SK-N-SH (cell line): ENCODE measurements at regions of chr15 and their contacts with region 1.

Region 1: GRCh38 chr15:33994005-33994615 is 25.8 kb downstream of the CHRM5 start:
- DNase-seq: no peak
- H3K4me3 ChIP-seq: no peak overlapping the region
- H3K27ac ChIP-seq: no peak overlapping the region
- H3K4me1 ChIP-seq: peaks cover 0 to 6% of the 10 kb centered on the region in 2 experiments; a peak in 1 of 4 replicates
- H3K27me3 ChIP-seq: no peaks in the 10 kb centered on the region
- CTCF ChIP-seq: peak; percentile 66
- EP300 ChIP-seq: no peak
- RAD21 ChIP-seq: peak; percentile 62

Region 2: GRCh38 chr15:33975022-33975565 is 19.0 kb before region 1 on chr15:
- CTCF ChIA-PET with region 1: interaction called, 10 read pairs
- POLR2A ChIA-PET with region 1: no interaction called
- DNase-seq: no peak
- H3K4me3 ChIP-seq: no peak overlapping the region
- H3K27ac ChIP-seq: no peak overlapping the region
- H3K4me1 ChIP-seq: no peaks in the 10 kb centered on the region; a peak in 1 of 4 replicates
- H3K27me3 ChIP-seq: no peaks in the 10 kb centered on the region
- CTCF ChIP-seq: peak; percentile 42; the same call in 1 of the 2 replicates
- EP300 ChIP-seq: no peak
- RAD21 ChIP-seq: peak; percentile 39